ENCODE measurements at regions of chr16 and their contacts with region 1.

Region 1: GRCh38 chr16:28873536-28874201 is 4.6 kb upstream of the ATP2A1 start:
- DNase-seq: peak; percentile 63 to 85 (median 80)
- ATAC-seq: peak; percentile 92
- H3K4me3 ChIP-seq: no peak overlapping the region
- H3K27ac ChIP-seq: no peak overlapping the region
- H3K4me1 ChIP-seq: peaks cover under 1 to 52% of the 10 kb centered on the region in 2 experiments; a peak in 4 of 5 replicates
- H3K27me3 ChIP-seq: no peaks in the 10 kb centered on the region; a peak in 1 of 5 replicates
- CTCF ChIP-seq: peak; percentile 84 to 87 (median 86)
- EP300 ChIP-seq: no peak
- POLR2A ChIP-seq: no peak
- RAD21 ChIP-seq: peak; percentile 42 to 59

Region 2: DNA sequence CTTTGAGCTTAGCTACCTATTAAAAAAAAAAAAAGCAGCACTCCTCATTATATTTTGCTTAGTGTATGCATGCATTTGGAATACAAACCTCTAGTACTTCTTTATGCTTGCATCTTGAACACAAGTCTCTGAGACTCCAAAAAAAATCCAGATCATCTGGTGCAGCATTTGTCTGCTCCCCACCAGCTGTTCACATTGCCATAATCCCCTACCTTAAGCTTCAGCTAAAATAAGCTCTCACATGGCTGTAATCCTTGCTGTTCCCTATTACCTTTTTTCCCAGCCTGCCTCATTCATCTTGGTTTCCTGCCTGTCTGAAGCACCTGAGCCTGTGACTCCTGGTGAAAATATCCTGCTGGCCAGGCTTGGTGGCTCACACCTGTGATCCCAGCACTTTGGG is 69.6 kb after region 1 on chr16:
- CTCF ChIA-PET with region 1: interaction called, 10 read pairs
- POLR2A ChIA-PET with region 1: interaction called, 3 read pairs
- in situ Hi-C with region 1: no loop called
- intact Hi-C with region 1: loop called (anchors 5 kb)
- DNase-seq: no peak
- ATAC-seq: no peak
- H3K4me3 ChIP-seq: no peak overlapping the region
- H3K27ac ChIP-seq: no peak overlapping the region
- H3K4me1 ChIP-seq: peaks cover 6 to 15% of the 10 kb centered on the region in 2 experiments; a peak in 4 of 5 replicates
- H3K27me3 ChIP-seq: no peaks in the 10 kb centered on the region
- CTCF ChIP-seq: no peak
- EP300 ChIP-seq: no peak
- POLR2A ChIP-seq: no peak
- RAD21 ChIP-seq: no peak

Region 3: GRCh38 chr16:28950648-28951409 is 77.2 kb after region 1 on chr16 and contains the start of gene NFATC2IP:
- CTCF ChIA-PET with region 1: interaction called, 10 read pairs
- POLR2A ChIA-PET with region 1: no interaction called
- in situ Hi-C with region 1: no loop called
- intact Hi-C with region 1: loop called (anchors 5 kb)
- DNase-seq: peak; percentile 95 to 100 (median 97)
- ATAC-seq: peak; percentile 98
- H3K4me3 ChIP-seq: peak within 1 kb of the TSS; percentile 100
- H3K27ac ChIP-seq: peak within 1 kb of the TSS; percentile 94
- H3K4me1 ChIP-seq: peaks cover 9 to 23% of the 10 kb centered on the region in 2 experiments; a peak in 4 of 5 replicates
- H3K27me3 ChIP-seq: no peaks in the 10 kb centered on the region
- CTCF ChIP-seq: no peak
- EP300 ChIP-seq: no peak
- POLR2A ChIP-seq: peak; percentile 89
- RAD21 ChIP-seq: no peak
- polyA plus RNA-seq, gene NFATC2IP: 15.6 to 16.1 TPM

Region 4: DNA sequence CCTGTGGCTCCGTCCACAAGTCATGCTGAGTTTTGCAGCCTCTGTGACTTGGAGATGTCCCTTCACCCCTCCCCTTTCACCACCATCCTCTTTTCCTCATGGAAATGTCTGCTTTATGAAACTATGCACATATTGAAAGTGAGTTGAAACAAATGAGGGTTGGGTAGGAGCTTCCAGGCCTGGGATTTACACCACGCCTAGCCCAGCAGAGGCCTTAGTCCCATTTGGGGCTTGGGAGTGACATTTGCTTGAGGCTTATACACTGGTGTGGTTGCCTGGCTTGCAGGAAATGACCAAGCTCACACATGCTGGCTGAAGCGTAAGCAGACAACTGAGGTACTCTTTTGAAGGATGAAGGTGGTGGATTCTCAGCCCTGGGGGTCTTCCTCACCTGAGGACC is 90.4 kb after region 1 on chr16:
- CTCF ChIA-PET with region 1: no interaction called
- POLR2A ChIA-PET with region 1: no interaction called
- in situ Hi-C with region 1: no loop called
- intact Hi-C with region 1: no loop called
- DNase-seq: no peak
- ATAC-seq: no peak
- H3K4me3 ChIP-seq: no peak overlapping the region
- H3K27ac ChIP-seq: no peak overlapping the region
- H3K4me1 ChIP-seq: no peaks in the 10 kb centered on the region
- H3K27me3 ChIP-seq: no peaks in the 10 kb centered on the region
- CTCF ChIP-seq: no peak
- EP300 ChIP-seq: no peak
- POLR2A ChIP-seq: no peak
- RAD21 ChIP-seq: no peak

Region 5: DNA sequence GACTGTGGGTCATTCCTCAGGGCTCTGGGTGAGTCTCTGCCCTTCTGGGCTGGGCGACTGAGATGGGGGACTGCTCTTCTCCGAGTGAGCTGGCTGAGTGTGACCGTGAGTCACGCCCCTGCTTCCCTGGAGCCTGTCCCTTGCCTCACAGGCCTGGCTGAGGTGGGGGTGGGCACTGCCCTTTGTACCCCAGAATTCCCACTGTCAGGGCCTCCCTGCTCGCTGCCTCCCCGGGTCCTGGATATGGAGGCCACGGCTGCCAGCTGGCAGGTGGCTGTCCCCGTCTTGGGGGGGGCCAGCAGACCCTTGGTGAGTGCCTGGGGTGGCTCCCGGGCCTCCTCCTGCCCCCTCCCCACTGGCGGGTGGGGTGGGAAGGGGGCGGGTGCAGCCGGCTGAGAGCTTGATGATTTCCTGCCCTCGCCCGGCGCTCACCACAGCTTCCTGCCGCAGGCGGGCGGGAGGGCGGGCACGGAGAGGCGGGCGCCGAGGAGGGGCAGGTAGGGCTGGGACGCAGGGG is 111.0 kb after region 1 on chr16 and contains the start of gene LAT:
- CTCF ChIA-PET with region 1: no interaction called
- POLR2A ChIA-PET with region 1: no interaction called
- in situ Hi-C with region 1: no loop called
- intact Hi-C with region 1: no loop called
- DNase-seq: no peak
- ATAC-seq: no peak
- H3K4me3 ChIP-seq: no peak within 1 kb of the TSS
- H3K27ac ChIP-seq: no peak within 1 kb of the TSS
- H3K4me1 ChIP-seq: peaks cover 0 to 34% of the 10 kb centered on the region in 2 experiments; a peak in 1 of 5 replicates
- H3K27me3 ChIP-seq: no peaks in the 10 kb centered on the region
- CTCF ChIP-seq: no peak
- EP300 ChIP-seq: no peak
- POLR2A ChIP-seq: no peak
- RAD21 ChIP-seq: no peak
- polyA plus RNA-seq, gene LAT: 0.59 to 0.63 TPM